ENCODE measurements at regions of chr2 and their contacts with region 1.

Region 1: DNA sequence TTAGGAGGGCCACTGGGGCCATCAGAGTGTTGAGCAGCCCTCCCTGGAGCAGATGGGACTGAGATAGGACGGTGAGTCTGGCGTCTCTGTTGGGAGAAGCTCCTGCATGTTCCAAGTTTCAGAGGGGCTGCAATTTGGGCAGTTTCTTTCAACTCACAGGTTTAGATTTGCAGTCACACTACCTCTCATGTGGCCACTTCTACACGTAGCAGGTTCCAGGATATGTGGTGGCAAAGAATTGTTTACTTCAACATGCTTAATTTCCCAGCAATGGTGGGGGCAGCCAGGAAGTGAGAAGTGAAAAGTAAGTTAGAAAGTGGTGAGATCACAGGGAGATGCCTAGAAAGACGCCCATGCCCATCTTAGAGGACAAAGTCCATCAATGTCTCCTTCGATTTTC is 9.3 kb downstream of the NCK2 start:
- DNase-seq: no peak
- ATAC-seq: no peak
- H3K4me3 ChIP-seq: no peak overlapping the region
- H3K27ac ChIP-seq: no peak overlapping the region
- H3K4me1 ChIP-seq: peaks cover 58 to 65% of the 10 kb centered on the region in 2 donors
- H3K27me3 ChIP-seq: no peaks in the 10 kb centered on the region
- CTCF ChIP-seq: no peak
- POLR2A ChIP-seq: no peak

Region 2: GRCh38 chr2:105775809-105776559 is 22.0 kb after region 1 on chr2:
- in situ Hi-C with region 1: no loop called
- intact Hi-C with region 1: loop called (anchors 2 kb)
- DNase-seq: no peak
- ATAC-seq: no peak
- H3K4me3 ChIP-seq: no peak overlapping the region
- H3K27ac ChIP-seq: peak overlapping the region; percentile 50 to 85 (median 60)
- H3K4me1 ChIP-seq: peaks cover 84 to 87% of the 10 kb centered on the region in 2 donors
- H3K27me3 ChIP-seq: no peaks in the 10 kb centered on the region
- CTCF ChIP-seq: no peak
- POLR2A ChIP-seq: no peak

Measured in gastrocnemius medialis (tissue), 4 donors.